HCT116 (cell line): ENCODE measurements at regions of chr12 and their contacts with region 1.

Region 1: DNA sequence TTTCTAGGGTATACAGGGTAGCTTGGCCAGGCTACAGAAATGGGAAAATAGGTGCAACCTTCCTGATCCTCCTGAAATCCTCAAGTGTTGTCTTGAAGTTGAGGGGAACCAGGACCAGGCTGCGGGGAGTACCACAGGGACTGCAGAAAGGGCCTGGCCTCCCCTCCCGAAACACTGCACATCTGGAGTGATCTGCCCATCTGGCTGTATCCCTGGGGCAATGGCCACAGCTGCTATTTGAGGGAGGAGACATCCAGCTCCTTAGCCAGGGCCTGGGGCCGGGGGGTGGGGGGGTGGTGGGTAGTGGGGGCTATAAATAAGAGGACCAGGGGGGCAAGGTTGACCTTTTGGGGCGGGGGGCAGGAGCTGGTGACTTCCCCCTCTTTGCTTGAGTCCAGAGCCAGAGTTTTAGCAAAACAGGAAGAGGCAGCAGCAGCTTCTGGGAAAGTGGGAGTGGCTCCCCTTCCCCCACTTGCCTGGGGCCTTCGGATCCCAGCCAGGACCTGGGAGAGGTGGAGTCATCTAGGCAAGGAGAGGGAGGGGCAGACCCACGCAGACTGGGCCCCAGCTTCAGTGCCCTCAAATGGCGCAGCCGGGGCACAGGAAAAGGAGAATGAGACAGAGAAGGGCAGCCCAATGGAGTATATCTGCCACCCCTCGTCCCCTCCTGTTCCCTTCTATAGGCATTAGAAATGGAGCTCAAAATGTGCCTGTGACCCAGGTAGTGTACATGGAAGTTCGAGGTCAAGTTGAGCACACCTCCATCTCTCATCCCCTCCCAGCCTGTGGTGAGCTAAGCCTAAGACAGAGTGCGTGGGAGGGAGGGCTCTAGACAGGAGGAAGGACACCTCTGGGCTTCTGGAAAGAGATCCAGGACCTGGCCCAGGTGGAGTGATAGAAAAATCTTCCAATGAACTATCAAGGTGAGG is 9.2 kb upstream of the HDAC7 start:
- DNase-seq: peak; percentile 41
- ATAC-seq: peak; percentile 89
- H3K4me3 ChIP-seq: peak overlapping the region; percentile 27 to 37
- H3K27ac ChIP-seq: peak overlapping the region; percentile 53
- H3K4me1 ChIP-seq: peaks cover 30 to 37% of the 10 kb centered on the region in 2 experiments
- H3K27me3 ChIP-seq: no peaks in the 10 kb centered on the region
- CTCF ChIP-seq: no peak
- POLR2A ChIP-seq: peak; percentile 25
- RAD21 ChIP-seq: no peak

Region 2: DNA sequence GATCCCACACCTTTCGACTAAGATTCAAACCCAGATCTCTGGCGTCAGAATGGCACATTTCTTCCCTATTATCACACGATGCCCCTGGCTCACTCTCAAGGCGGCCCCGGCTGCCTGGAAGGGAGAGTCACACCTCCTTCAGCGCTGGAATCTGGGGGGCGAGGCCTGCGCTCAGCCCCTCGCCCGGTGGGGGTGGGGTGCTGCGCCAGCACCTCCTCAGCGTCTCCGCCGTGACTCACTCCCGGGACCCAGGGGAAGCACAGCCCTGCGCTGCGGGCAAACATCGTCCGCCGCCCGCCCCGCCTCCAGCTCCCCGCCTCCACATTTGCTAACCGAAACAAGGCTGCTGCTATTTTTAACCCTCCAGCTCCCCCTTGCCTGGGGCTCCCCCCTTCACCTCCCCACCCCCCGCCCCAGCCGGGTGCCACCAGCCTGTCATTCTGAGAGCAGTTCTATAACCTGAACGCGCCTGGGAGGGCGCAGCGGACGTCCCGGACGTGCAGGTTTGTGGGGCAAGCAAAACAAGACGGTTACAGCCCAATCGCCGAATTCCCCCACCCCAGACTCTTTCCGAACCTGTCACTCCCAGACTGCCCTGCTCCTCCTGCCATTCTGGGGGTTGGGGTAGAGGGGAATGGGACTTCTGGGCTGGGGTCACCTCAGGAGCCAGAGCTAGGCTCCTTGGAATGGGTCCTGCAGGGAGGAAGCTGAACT is 15.9 kb before region 1 on chr12:
- CTCF ChIA-PET with region 1: interaction called, 10 read pairs
- POLR2A ChIA-PET with region 1: interaction called, 8 read pairs
- RAD21 ChIA-PET with region 1: no interaction called
- intact Hi-C with region 1: no loop called
- DNase-seq: no peak
- ATAC-seq: peak; percentile 79
- H3K4me3 ChIP-seq: peak overlapping the region; percentile 49 to 59
- H3K27ac ChIP-seq: peak overlapping the region; percentile 79
- H3K4me1 ChIP-seq: peaks cover 51 to 100% of the 10 kb centered on the region in 2 experiments
- H3K27me3 ChIP-seq: no peaks in the 10 kb centered on the region
- CTCF ChIP-seq: no peak
- POLR2A ChIP-seq: no peak
- RAD21 ChIP-seq: no peak

Region 3: DNA sequence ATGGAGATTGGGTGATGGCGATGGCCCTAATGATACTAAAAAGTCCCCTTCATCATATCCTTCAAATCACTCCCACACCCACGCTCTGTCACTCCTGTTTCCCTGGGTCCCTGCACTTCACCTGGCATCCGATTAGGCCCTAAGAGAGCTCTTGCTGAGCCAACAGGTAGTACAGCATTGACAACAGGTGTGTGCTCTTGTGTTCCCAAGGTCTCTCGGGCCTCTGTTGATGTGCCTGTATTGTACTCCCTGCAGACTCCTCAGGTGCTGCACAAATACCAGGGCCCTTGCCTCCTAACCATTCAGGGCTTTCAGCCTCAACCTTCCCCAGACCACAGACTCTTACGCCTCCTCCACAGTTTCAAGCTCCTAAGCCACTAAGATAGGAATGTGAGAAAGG is 101.8 kb after region 1 on chr12:
- CTCF ChIA-PET with region 1: no interaction called
- POLR2A ChIA-PET with region 1: no interaction called
- RAD21 ChIA-PET with region 1: no interaction called
- intact Hi-C with region 1: no loop called
- DNase-seq: no peak
- ATAC-seq: no peak
- H3K4me3 ChIP-seq: no peak overlapping the region
- H3K27ac ChIP-seq: no peak overlapping the region
- H3K4me1 ChIP-seq: no peaks in the 10 kb centered on the region
- H3K27me3 ChIP-seq: no peaks in the 10 kb centered on the region
- CTCF ChIP-seq: no peak
- POLR2A ChIP-seq: no peak
- RAD21 ChIP-seq: no peak